GM10248 (cell line): ENCODE measurements at regions of chr17 and their contacts with region 1.

Region 1: DNA sequence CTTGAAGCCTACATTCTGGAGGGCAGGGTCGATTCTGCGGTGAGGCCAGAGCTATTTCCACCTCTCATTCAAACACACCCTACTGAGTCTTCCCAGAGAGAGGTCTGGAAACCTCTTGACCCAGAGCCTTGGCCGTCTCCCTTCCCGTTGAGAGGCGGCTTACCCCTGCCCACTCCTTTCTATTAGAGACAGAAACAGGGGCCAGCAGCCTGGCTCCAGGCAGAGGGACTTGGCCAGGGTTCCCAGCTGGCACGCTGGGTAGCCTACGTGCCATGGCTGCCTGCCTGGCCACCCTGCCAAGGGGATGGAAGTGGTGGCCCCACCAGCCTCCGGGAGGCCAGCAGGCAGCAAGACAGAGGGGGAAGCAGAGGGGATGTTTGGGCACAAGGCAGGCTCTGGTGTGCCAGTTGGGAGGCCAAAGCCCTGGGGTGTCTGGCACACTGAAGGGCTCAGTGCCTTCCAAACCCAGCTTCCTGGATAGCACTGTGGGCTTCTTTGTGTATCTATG is 6.0 kb downstream of the STAC2 start:
- DNase-seq: no peak
- CTCF ChIP-seq: no peak

Region 2: DNA sequence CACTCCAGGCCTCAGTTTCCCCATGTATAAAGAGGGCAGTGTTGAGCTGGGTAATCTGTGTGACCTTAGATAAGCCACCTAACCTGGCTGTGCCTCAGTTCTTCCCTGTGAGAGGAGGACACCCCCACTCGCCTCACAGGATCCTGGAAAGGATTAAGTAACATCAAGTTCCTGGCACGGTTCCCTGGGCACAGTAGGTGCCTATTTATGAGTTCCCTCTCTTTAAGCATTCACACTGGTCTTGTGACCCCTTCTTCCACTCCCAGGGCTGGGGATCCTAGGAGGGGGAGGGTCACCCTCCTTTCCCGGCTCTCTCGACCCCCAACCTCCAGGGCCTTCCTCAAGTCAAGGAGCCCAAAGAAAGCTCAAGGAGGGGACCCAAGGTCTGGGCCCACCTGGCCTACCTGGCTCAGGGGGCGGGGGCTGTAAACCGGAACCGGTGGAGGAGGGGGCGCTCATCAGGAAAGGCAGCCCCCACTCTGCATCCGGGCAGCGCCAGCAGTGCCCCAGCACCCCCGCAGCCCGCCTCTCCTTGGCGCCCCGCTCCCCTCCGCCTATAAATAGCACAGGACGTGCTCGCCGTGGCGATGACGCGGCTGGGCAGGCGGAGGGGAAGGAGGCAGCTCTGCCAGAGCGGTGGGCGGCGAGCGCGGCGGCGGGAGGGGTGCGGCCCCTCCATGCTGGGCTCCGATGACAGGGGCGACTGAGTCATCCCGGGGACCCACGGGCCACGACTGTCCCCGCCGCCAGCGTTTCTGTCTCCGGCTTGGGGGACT is 10.2 kb before region 1 on chr17:
- CTCF ChIA-PET with region 1: interaction called, 12 read pairs
- POLR2A ChIA-PET with region 1: interaction called, 3 read pairs
- DNase-seq: no peak
- CTCF ChIP-seq: no peak

Region 3: DNA sequence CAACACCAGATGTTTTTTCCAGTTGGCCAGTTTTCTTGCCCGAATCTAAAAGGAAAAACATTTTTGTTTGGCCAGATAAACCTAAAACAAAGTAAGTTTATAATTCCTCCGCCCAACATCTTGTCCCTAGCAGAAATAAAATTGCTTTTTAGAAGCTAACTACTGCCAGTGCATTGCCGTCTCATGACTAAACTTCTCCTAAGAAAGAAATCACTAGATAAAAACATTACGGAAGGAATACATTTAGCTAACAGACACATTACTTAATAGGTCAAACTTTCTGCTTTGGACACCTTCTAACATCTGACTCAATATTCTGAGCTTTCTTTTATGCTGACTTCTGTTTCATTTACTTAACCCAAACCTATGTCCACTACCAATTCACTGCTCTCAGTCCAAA is 145.5 kb after region 1 on chr17:
- CTCF ChIA-PET with region 1: no interaction called
- POLR2A ChIA-PET with region 1: no interaction called
- DNase-seq: no peak
- CTCF ChIP-seq: no peak